Caco-2 (cell line): ENCODE measurements at regions of chr20 and their contacts with region 1.

Region 1: DNA sequence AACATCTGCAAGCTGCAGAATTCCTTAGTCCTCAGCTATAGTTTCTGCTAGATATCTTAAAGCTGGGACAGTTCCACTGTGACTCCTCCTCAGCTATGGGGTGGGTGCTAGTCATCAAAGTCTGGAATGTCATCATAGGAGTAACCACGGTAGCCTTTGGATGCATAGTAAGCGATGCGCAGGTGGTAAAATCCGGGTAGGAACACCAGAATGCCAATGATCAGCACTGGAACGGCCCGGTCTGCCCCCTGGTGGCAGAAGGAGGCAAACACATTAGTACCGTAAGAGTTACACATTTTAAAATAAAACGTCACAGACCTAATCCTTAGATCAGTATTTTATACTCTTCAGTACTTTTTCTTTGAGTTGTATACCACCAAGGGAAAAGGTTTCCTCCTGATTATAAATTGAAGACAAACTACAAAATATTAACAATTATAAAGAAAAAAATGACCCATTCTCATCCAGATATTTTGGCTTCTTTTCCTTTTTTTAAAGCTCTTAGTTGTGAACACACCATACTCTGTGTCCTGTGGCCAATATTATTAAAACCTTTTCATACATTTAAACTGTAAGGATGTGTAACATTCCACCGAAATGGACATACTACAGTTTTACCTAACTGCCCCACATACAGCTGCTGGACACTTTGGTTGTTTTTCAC is 18.9 kb downstream of the PCNA start:
- DNase-seq: peak; percentile 62 to 81
- H3K4me3 ChIP-seq: no peak overlapping the region
- H3K4me3 Mint-ChIP-seq: no peak overlapping the region
- H3K27ac Mint-ChIP-seq: no peak overlapping the region
- H3K4me1 ChIP-seq: no peaks in the 10 kb centered on the region
- H3K4me1 Mint-ChIP-seq: no peaks in the 10 kb centered on the region
- H3K27me3 ChIP-seq: no peaks in the 10 kb centered on the region
- H3K27me3 Mint-ChIP-seq: no peaks in the 10 kb centered on the region
- CTCF ChIP-seq: peak; percentile 85 to 91

Region 2: DNA sequence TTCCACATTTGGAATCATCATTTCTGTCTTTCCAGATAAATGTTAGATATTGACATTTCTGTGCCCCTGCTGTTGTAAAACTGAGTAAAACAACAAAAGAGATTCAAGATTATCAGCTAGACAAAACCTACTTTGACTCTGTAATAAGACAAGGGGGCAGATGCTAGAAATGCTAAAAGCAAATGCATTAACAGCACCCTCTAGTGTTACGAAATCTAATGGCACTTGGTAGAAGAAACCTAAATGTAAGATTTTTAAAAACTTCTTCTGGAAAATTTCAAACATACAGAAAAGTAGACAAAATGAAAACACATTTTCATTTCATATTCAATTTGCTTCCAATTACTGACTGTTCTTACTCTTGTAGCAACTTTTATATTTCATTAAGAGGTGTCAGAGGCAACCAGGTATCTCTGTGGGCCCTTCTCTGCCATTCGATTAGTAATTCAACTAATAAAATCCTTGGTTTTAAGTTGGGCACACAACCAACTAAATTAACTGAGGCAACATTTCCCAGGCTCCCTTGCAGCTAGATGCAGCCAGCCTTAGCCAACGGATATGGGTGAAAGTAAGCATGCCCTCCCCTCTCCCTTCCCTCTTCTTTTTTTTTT is 144.5 kb before region 1 on chr20:
- CTCF ChIA-PET with region 1: interaction called, 3 read pairs
- POLR2A ChIA-PET with region 1: no interaction called
- intact Hi-C with region 1: loop called (anchors 5 kb)
- DNase-seq: peak in 1 of 2 experiments; percentile 58
- H3K4me3 ChIP-seq: no peak overlapping the region
- H3K4me3 Mint-ChIP-seq: no peak overlapping the region
- H3K27ac Mint-ChIP-seq: no peak overlapping the region
- H3K4me1 ChIP-seq: peaks cover under 1% of the 10 kb centered on the region
- H3K4me1 Mint-ChIP-seq: no peaks in the 10 kb centered on the region
- H3K27me3 ChIP-seq: no peaks in the 10 kb centered on the region
- H3K27me3 Mint-ChIP-seq: no peaks in the 10 kb centered on the region
- CTCF ChIP-seq: peak; percentile 76 to 88

Region 3: GRCh38 chr20:5001174-5002076 is 99.4 kb before region 1 on chr20 and contains the start of gene SLC23A2:
- CTCF ChIA-PET with region 1: interaction called, 3 read pairs
- POLR2A ChIA-PET with region 1: no interaction called
- intact Hi-C with region 1: loop called (anchors 5 kb)
- DNase-seq: peak; percentile 51 to 71
- H3K4me3 ChIP-seq: peak within 1 kb of the TSS; percentile 61
- H3K4me3 Mint-ChIP-seq: peak within 1 kb of the TSS; percentile 84
- H3K27ac Mint-ChIP-seq: peak within 1 kb of the TSS; percentile 31
- H3K4me1 ChIP-seq: peaks cover 22% of the 10 kb centered on the region
- H3K4me1 Mint-ChIP-seq: peaks cover 30% of the 10 kb centered on the region
- H3K27me3 ChIP-seq: no peaks in the 10 kb centered on the region
- H3K27me3 Mint-ChIP-seq: no peaks in the 10 kb centered on the region
- CTCF ChIP-seq: no peak
- total RNA-seq, gene SLC23A2: 26.4 and 37.3 TPM in 2 replicates